ENCODE measurements at regions of chr1 and their contacts with region 1.

Region 1: GRCh38 chr1:83998498-83999315 is at the start of gene TTLL7:
- DNase-seq: no peak
- ATAC-seq: peak; percentile 83
- H3K4me3 ChIP-seq: peak within 1 kb of the TSS; percentile 69 to 73
- H3K27ac ChIP-seq: peak within 1 kb of the TSS; percentile 76
- H3K4me1 ChIP-seq: peaks cover 6 to 17% of the 10 kb centered on the region in 2 experiments; a peak in 3 of 4 replicates
- H3K27me3 ChIP-seq: no peaks in the 10 kb centered on the region
- CTCF ChIP-seq: no peak
- POLR2A ChIP-seq: no peak
- RAD21 ChIP-seq: no peak
- total RNA-seq, gene TTLL7: 21.2 TPM

Region 2: DNA sequence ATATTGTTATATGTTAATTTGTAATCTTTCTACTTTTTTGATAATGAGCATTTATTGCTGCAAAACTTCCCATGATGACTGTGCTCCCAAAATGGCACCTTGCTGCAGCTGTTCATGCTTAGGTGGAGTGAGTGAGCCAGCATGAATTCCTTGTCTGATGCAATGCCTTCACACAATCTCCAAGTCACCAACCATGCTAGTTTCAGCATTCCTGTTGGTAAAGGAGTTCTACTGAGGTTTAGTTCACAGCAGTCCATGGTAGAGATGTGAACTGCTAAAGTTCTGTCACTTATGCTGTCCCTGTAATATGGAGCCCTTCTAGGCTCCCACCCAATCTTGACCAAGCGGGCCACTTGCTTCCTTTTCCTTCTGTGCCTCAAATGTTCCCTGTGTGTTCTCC is 119.2 kb after region 1 on chr1:
- CTCF ChIA-PET with region 1: no interaction called
- POLR2A ChIA-PET with region 1: no interaction called
- RAD21 ChIA-PET with region 1: no interaction called
- intact Hi-C with region 1: loop called (anchors 5 kb)
- DNase-seq: no peak
- ATAC-seq: no peak
- H3K4me3 ChIP-seq: no peak overlapping the region
- H3K27ac ChIP-seq: no peak overlapping the region
- H3K4me1 ChIP-seq: peaks cover 0 to 3% of the 10 kb centered on the region in 2 experiments; a peak in 1 of 4 replicates
- H3K27me3 ChIP-seq: no peaks in the 10 kb centered on the region
- CTCF ChIP-seq: no peak
- POLR2A ChIP-seq: no peak
- RAD21 ChIP-seq: no peak

Measured in HCT116 (cell line).